GM12878 (cell line): ENCODE measurements at regions of chr5 and their contacts with region 1.

Region 1: GRCh38 chr5:60522292-60522905 is 177.6 kb downstream of the DEPDC1B start:
- DNase-seq: peak; percentile 87
- ATAC-seq: peak; percentile 85
- H3K4me3 ChIP-seq: peak overlapping the region; percentile 78
- H3K27ac ChIP-seq: peak overlapping the region; percentile 96
- H3K4me1 ChIP-seq: peaks cover 30% of the 10 kb centered on the region
- H3K27me3 ChIP-seq: no peaks in the 10 kb centered on the region
- CTCF ChIP-seq: no peak
- EP300 ChIP-seq: peak; percentile 56 to 73; a peak in 3 of 4 replicates
- POLR2A ChIP-seq: peak; percentile 26; the same call in 1 of the 2 replicates
- RAD21 ChIP-seq: 0 out of 2 replicates have a peak, but pooled peaks have one; percentile 14

Region 2: DNA sequence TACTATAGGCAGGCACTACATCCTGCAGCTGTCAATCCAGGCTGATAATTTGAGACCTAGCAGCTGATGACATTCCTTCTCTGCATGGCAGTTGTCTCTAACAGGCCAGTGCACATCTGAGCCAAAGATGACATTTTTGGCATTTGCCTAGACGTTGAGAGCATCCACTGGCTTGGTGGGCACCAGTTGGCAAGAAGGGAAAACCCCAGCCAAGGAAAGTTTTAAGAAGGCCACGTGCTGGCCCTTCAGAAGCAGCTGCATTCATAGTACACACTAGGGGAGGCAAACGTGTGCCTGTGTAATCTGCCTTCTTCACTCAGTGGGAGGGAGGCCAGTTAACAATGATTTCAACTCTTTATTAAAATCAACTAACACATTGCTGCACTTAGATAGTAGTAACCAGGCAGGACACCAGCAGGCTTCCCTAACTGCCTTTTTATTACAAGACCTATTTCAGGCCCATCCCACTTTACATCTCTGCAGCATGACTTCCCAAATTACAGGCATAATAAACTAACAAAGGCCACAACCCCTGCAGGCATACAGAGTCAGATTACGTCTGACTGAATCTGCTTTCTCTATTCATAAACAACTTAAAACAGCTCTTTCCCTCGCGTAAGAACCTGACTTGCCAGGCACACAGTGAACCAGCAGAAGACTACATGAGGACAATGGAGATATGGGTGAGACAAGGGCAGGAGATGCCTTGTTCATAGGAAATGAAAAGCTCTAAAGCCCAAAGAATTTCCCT is 1205.2 kb before region 1 on chr5:
- CTCF ChIA-PET with region 1: no interaction called
- POLR2A ChIA-PET with region 1: no interaction called
- RAD21 ChIA-PET with region 1: no interaction called
- SMC1A ChIA-PET with region 1: no interaction called
- in situ Hi-C with region 1: no loop called
- intact Hi-C with region 1: no loop called
- DNase-seq: no peak
- ATAC-seq: no peak
- H3K4me3 ChIP-seq: no peak overlapping the region
- H3K27ac ChIP-seq: no peak overlapping the region
- H3K4me1 ChIP-seq: no peaks in the 10 kb centered on the region
- H3K27me3 ChIP-seq: no peaks in the 10 kb centered on the region
- CTCF ChIP-seq: no peak
- EP300 ChIP-seq: no peak
- POLR2A ChIP-seq: no peak
- RAD21 ChIP-seq: no peak

Region 3: DNA sequence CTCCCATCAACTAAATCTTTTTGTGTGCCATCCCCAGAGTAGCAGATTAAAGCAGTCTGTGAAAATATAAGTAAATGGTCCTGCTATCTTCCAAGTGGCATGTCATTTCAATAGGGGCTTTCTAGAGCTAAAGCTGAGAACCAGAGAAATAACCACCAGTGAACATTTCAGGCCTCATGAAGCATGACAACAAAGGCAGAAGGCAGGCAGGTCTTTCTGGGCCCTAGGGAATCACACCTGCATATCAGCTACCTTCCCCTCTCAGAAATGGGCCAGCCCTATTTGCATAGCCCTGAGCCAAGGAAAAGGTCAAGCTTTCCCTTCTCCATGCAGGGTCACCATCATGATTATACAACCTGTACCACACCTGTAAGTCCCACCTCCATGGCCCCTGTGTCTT is 27.8 kb before region 1 on chr5:
- CTCF ChIA-PET with region 1: interaction called, 4 read pairs
- POLR2A ChIA-PET with region 1: interaction called, 4 read pairs
- RAD21 ChIA-PET with region 1: interaction called, 16 read pairs
- SMC1A ChIA-PET with region 1: interaction called, 11 read pairs
- in situ Hi-C with region 1: no loop called
- intact Hi-C with region 1: no loop called
- DNase-seq: peak; percentile 54
- ATAC-seq: peak; percentile 87
- H3K4me3 ChIP-seq: no peak overlapping the region
- H3K27ac ChIP-seq: peak overlapping the region; percentile 17; the same call in 1 of the 2 replicates
- H3K4me1 ChIP-seq: peaks cover 17% of the 10 kb centered on the region
- H3K27me3 ChIP-seq: no peaks in the 10 kb centered on the region
- CTCF ChIP-seq: no peak
- EP300 ChIP-seq: peak in 1 of 2 experiments; percentile 12; a peak in 1 of 4 replicates
- POLR2A ChIP-seq: no peak
- RAD21 ChIP-seq: peak; percentile 14; the same call in 1 of the 2 replicates

Region 4: DNA sequence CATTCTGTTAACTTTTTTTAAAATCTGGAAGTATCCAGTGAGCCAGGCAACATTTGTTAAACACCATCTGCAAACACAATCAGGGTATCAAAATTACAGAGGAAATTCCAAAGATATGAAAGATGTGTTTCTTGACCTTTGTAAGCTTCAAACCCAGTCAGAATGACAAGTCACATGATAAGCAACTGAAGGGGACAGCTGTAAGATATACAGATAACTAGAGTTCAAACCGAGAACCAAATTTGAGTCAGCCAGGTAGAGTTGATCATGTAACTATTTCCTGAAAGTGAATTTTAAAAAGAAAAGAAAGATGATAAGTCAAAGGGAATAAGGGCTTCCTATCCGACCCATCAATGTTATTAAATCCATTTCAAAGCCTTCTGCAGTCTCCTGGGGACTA is 18.6 kb before region 1 on chr5:
- CTCF ChIA-PET with region 1: interaction called, 10 read pairs
- POLR2A ChIA-PET with region 1: interaction called, 4 read pairs
- RAD21 ChIA-PET with region 1: interaction called, 23 read pairs
- SMC1A ChIA-PET with region 1: interaction called, 14 read pairs
- in situ Hi-C with region 1: no loop called
- intact Hi-C with region 1: no loop called
- DNase-seq: no peak
- ATAC-seq: peak; percentile 93
- H3K4me3 ChIP-seq: 0 out of 2 replicates have a peak overlapping the region, but pooled peaks have one; percentile 28
- H3K27ac ChIP-seq: peak overlapping the region; percentile 53
- H3K4me1 ChIP-seq: peaks cover 26% of the 10 kb centered on the region
- H3K27me3 ChIP-seq: no peaks in the 10 kb centered on the region
- CTCF ChIP-seq: no peak
- EP300 ChIP-seq: peak; percentile 73 to 83; a peak in 3 of 4 replicates
- POLR2A ChIP-seq: no peak
- RAD21 ChIP-seq: no peak

Region 5: DNA sequence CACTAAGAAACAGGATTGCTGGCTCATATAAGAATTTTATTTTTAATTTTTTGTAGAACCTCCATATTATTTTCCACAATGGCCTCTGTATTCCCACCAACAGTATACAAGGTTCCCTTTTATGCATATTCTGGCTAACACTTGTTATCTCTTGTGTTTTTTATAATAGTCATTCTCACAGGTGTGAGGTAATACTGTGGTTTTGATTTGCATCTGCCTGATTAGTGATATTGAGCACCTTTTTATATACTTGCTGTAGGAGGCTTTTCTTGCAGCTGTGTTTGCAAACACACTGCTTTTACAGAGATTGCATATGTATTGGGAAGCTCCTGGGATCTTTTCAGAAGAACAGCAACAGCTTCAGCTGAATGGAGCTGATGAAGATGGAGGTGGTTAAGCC is 12.8 kb after region 1 on chr5:
- CTCF ChIA-PET with region 1: interaction called, 8 read pairs
- POLR2A ChIA-PET with region 1: interaction called, 6 read pairs
- RAD21 ChIA-PET with region 1: interaction called, 3 read pairs
- SMC1A ChIA-PET with region 1: interaction called, 30 read pairs
- in situ Hi-C with region 1: no loop called
- intact Hi-C with region 1: no loop called
- DNase-seq: no peak
- ATAC-seq: peak; percentile 46
- H3K4me3 ChIP-seq: no peak overlapping the region
- H3K27ac ChIP-seq: no peak overlapping the region
- H3K4me1 ChIP-seq: peaks cover 27% of the 10 kb centered on the region
- H3K27me3 ChIP-seq: no peaks in the 10 kb centered on the region
- CTCF ChIP-seq: no peak
- EP300 ChIP-seq: peak in 1 of 2 experiments; percentile 54; a peak in 1 of 4 replicates
- POLR2A ChIP-seq: no peak
- RAD21 ChIP-seq: no peak

Region 6: GRCh38 chr5:60540856-60541805 is 18.7 kb after region 1 on chr5:
- CTCF ChIA-PET with region 1: interaction called, 8 read pairs
- POLR2A ChIA-PET with region 1: interaction called, 12 read pairs
- RAD21 ChIA-PET with region 1: interaction called, 26 read pairs
- SMC1A ChIA-PET with region 1: interaction called, 30 read pairs
- in situ Hi-C with region 1: no loop called
- intact Hi-C with region 1: no loop called
- DNase-seq: peak; percentile 90
- ATAC-seq: peak; percentile 96
- H3K4me3 ChIP-seq: peak overlapping the region; percentile 18; the same call in 1 of the 2 replicates
- H3K27ac ChIP-seq: peak overlapping the region; percentile 59
- H3K4me1 ChIP-seq: peaks cover 22% of the 10 kb centered on the region
- H3K27me3 ChIP-seq: no peaks in the 10 kb centered on the region
- CTCF ChIP-seq: peak in 1 of 3 experiments; percentile 33; a peak in 2 of 6 replicates
- EP300 ChIP-seq: peak; percentile 82 to 97
- POLR2A ChIP-seq: no peak
- RAD21 ChIP-seq: peak; percentile 34

Region 7: DNA sequence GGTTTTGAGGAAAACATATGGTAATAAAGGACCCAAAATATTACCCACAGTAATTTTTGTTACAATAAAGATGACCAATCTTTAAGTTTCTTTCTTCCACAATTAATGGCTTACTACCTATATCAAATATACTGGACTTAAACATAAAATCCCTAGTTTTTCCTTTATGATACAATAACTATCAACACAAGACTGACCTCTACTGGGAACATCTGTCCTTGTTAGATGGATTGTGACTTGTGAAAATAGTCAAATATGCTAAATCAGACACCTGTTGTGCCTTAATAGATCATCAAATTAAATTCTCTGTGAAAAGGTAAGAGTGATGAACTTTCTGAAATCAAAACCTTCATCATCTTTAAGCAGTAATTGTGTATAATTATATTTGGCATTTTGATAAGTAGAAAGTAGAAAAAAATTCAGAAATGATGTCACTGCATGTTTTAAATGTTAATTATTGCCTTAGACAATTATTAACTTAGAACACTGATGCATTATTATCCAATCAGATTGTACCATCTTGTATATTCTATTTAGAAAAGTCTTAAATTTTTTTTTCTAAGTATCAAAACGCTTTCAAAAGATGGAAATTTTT is 64.0 kb after region 1 on chr5:
- CTCF ChIA-PET with region 1: no interaction called
- POLR2A ChIA-PET with region 1: no interaction called
- RAD21 ChIA-PET with region 1: interaction called, 7 read pairs
- SMC1A ChIA-PET with region 1: interaction called, 4 read pairs
- in situ Hi-C with region 1: no loop called
- intact Hi-C with region 1: loop called (anchors 5 kb)
- DNase-seq: no peak
- ATAC-seq: peak; percentile 38; the same call in 2 of the 3 replicates
- H3K4me3 ChIP-seq: no peak overlapping the region
- H3K27ac ChIP-seq: no peak overlapping the region
- H3K4me1 ChIP-seq: peaks cover 8% of the 10 kb centered on the region; the same call in 1 of the 2 replicates
- H3K27me3 ChIP-seq: no peaks in the 10 kb centered on the region
- CTCF ChIP-seq: peak; percentile 32 to 55 (median 53); a peak in 5 of 6 replicates
- EP300 ChIP-seq: no peak
- POLR2A ChIP-seq: no peak
- RAD21 ChIP-seq: peak; percentile 78

Region 8: DNA sequence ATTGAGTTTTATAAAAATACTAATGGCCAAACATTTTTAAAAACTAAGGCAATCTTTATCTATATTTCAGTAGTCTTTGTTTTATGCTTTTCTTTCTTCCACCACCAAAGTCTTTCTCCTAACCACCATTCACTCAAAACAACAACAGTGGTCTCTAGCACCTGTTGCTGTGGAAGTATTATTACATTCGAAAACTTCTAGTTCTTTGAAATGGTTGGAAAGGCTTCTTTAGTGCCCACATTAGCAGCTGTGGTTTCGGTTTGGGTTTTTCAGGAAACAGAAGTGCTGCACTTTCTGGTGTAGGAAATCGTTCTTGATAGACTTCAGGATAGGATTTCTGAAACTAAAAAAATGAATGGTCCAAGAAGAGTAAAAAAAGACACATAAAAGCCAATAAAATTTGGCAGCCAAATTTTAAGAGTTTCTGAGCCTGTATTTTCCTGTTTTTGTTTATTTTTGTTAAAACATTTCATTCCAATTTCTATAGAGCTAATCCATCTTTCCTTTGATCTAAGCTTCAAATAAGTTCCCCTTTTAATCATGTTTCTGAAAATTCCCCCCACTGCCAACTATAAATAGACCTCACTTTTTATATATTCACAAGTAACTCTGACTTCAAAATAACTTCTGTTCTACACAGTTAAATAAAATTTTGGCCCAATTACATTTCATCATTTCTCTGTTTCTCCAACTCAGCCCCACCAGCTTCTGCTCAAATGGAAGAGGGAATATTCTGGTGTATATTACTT is 75.3 kb after region 1 on chr5:
- CTCF ChIA-PET with region 1: no interaction called
- POLR2A ChIA-PET with region 1: interaction called, 3 read pairs
- RAD21 ChIA-PET with region 1: interaction called, 14 read pairs
- SMC1A ChIA-PET with region 1: interaction called, 14 read pairs
- in situ Hi-C with region 1: no loop called
- intact Hi-C with region 1: no loop called
- DNase-seq: peak; percentile 60
- ATAC-seq: peak; percentile 85
- H3K4me3 ChIP-seq: 0 out of 2 replicates have a peak overlapping the region, but pooled peaks have one; percentile 18
- H3K27ac ChIP-seq: peak overlapping the region; percentile 65
- H3K4me1 ChIP-seq: peaks cover 26% of the 10 kb centered on the region
- H3K27me3 ChIP-seq: no peaks in the 10 kb centered on the region
- CTCF ChIP-seq: no peak
- EP300 ChIP-seq: peak; percentile 49 to 77; a peak in 3 of 4 replicates
- POLR2A ChIP-seq: no peak
- RAD21 ChIP-seq: 0 out of 2 replicates have a peak, but pooled peaks have one; percentile 7